PC-3 (cell line): ENCODE measurements at regions of chr3 and their contacts with region 1.

Region 1: GRCh38 chr3:67790043-67790442 is 135.6 kb upstream of the SUCLG2 start:
- DNase-seq: peak; percentile 49
- ATAC-seq: peak; percentile 59; the same call in 1 of the 2 replicates
- H3K4me3 ChIP-seq: no peak overlapping the region
- H3K27ac ChIP-seq: no peak overlapping the region
- H3K4me1 ChIP-seq: peaks cover 8% of the 10 kb centered on the region
- H3K27me3 ChIP-seq: no peaks in the 10 kb centered on the region
- CTCF ChIP-seq: peak; percentile 58

Region 2: GRCh38 chr3:67774676-67775075 is 15.4 kb before region 1 on chr3:
- CTCF ChIA-PET with region 1: no interaction called
- POLR2A ChIA-PET with region 1: no interaction called
- intact Hi-C with region 1: no loop called
- DNase-seq: no peak
- ATAC-seq: no peak
- H3K4me3 ChIP-seq: no peak overlapping the region
- H3K27ac ChIP-seq: no peak overlapping the region
- H3K4me1 ChIP-seq: no peaks in the 10 kb centered on the region
- H3K27me3 ChIP-seq: no peaks in the 10 kb centered on the region
- CTCF ChIP-seq: no peak

Region 3: DNA sequence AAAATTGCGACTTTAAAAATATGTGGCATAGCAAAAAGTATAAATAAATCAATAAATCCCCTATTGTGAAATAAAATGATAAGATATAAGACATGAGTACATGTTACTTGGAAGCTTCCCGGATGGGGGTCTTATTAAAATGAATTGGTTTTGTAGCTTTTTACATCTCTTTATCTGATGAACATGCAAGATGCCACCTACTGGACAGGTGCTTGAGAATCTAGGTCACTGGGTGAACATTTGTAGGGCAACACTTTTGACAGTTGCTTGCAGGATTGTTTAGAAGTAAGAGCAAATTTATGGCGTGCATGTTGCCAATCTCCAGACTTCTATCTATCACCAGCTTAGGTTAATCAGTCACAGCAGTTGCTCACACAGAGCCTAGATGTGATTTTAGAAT is 227.0 kb after region 1 on chr3:
- CTCF ChIA-PET with region 1: no interaction called
- POLR2A ChIA-PET with region 1: no interaction called
- intact Hi-C with region 1: loop called (anchors 10 kb)
- DNase-seq: peak; percentile 7
- ATAC-seq: no peak
- H3K4me3 ChIP-seq: no peak overlapping the region
- H3K27ac ChIP-seq: no peak overlapping the region
- H3K4me1 ChIP-seq: no peaks in the 10 kb centered on the region
- H3K27me3 ChIP-seq: no peaks in the 10 kb centered on the region
- CTCF ChIP-seq: peak; percentile 46